Activated T-helper 2 cell treated with anti-CD3 and anti-CD28 coated beads, Interferon-gamma antibody, Interleukin-2, Interleukin-4, amounts not matched to agents 10 μg/mL and 5 μg/mL and 100 μg/mL, durations not matched to agents 14 hours and 24 hours and 36 hours (primary cell): ENCODE measurements at regions of chr12 and their contacts with region 1.

Region 1: DNA sequence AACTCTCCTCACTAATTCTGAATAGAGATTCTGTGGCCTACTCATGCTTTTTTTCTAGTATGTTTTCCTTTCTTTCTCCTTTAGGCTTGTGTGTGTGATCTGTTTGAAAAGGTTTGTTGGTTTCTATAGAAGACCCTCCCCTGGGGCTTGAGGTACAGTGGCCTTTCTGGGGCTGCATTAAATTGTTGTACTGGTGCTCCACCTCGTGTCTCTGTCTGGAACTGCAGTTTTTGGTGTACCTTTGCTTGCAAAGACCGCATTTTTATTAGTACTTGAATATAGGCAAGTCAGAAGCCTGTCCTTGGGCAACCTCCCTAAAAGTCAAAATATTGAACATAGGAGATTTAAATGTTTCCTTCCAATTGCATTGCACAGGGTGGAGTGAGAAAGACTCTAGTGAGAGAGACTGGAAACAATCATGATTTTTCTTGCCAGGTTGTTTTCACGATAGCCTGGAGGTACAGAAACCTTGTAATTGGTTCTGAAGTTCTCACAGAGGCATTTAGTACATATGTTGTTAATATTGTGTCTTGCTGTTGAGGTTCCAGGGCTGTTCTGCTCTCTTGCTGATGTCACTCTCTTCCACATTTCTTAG is 39.0 kb downstream of the SLCO1B1 start:
- DNase-seq: no peak
- H3K4me3 Mint-ChIP-seq: no peak overlapping the region
- H3K27ac Mint-ChIP-seq: no peak overlapping the region
- H3K4me1 Mint-ChIP-seq: no peaks in the 10 kb centered on the region
- H3K27me3 Mint-ChIP-seq: no peaks in the 10 kb centered on the region

Region 2: DNA sequence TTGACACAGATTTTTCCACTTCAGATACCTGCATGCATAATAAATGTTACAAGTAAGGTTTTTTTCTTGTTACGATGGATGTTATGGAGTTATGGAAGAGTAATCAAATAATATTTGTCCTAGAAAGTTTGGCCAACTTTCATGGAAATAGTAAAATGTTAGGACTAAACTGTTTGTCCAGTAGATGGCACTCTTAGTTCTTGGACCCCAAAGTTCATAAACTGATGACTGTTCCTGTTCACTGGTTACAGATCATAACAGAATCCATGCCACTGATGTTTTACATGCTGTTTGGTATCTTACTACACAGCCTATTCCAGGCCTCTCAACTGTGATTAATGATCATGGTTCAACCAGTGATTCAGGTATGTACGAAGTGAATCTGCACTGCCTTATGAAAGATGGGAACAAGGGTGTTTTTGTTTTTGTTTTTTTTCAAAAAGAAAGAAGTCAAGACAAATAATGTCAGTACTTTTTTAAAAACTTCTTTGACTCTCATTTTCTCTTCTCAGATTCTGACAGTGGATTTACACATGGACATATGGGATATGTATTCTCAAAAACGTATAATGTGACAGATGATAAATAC is 523.6 kb before region 1 on chr12:
- intact Hi-C with region 1: loop called (anchors 2 kb)
- DNase-seq: no peak
- H3K4me3 Mint-ChIP-seq: no peak overlapping the region
- H3K27ac Mint-ChIP-seq: no peak overlapping the region
- H3K4me1 Mint-ChIP-seq: no peaks in the 10 kb centered on the region
- H3K27me3 Mint-ChIP-seq: no peaks in the 10 kb centered on the region

Region 3: GRCh38 chr12:20946732-20947131 is 223.2 kb before region 1 on chr12:
- intact Hi-C with region 1: loop called (anchors 1 kb)
- DNase-seq: no peak
- H3K4me3 Mint-ChIP-seq: no peak overlapping the region
- H3K27ac Mint-ChIP-seq: no peak overlapping the region
- H3K4me1 Mint-ChIP-seq: no peaks in the 10 kb centered on the region
- H3K27me3 Mint-ChIP-seq: no peaks in the 10 kb centered on the region

Region 4: DNA sequence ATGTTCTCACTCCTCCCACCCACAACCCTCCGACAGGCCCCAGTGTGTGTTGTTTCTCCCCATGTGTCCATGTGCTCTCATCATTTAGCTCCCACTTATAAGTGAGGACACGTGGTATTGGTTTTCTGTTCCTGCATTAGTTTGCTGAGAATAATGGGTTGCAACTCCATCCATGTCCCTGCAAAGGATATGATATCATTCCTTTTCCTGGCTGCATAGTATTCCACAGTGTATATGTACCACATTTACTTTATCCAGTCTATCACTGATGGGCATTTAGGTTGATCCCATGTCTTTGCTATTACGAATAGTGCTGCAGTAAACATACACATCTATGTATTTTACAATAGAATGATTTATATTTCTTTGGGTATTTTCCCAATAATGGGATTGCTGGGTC is 87.2 kb after region 1 on chr12:
- intact Hi-C with region 1: no loop called
- DNase-seq: no peak
- H3K4me3 Mint-ChIP-seq: no peak overlapping the region
- H3K27ac Mint-ChIP-seq: no peak overlapping the region
- H3K4me1 Mint-ChIP-seq: no peaks in the 10 kb centered on the region
- H3K27me3 Mint-ChIP-seq: no peaks in the 10 kb centered on the region